Aorta (tissue), 5 donors: ENCODE measurements at regions of chr7 and their contacts with region 1.

Region 1: GRCh38 chr7:18570890-18571478 is 75.4 kb downstream of the HDAC9 start:
- DNase-seq: no peak
- ATAC-seq: no peak
- H3K4me3 ChIP-seq: peak overlapping the region in 1 of 2 donors; percentile 90
- H3K27ac ChIP-seq: no peak overlapping the region
- H3K4me1 ChIP-seq: peaks cover 0 to 5% of the 10 kb centered on the region in 2 donors
- H3K27me3 ChIP-seq: no peaks in the 10 kb centered on the region

Region 2: DNA sequence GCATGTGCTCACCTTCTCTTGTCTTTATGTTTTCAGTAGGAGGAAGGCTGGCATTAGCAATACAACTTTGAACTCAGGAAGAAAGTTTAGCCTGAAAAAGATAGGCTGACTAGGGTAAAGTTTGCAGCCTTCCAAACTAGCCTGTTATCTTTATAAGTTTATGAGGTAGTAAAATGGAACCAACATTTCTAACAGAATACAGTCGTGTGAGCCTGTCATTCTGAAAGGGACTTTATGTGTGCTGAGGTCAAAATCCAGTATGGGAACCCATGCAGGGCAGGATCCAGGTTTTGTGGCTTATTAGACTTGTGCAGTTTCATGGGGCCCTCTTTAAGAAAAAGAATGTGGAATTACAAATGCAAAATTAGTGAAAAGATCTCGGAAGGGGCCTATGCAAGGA is 342.3 kb before region 1 on chr7:
- intact Hi-C with region 1: no loop called
- DNase-seq: no peak
- ATAC-seq: no peak
- H3K4me3 ChIP-seq: no peak overlapping the region
- H3K27ac ChIP-seq: no peak overlapping the region
- H3K4me1 ChIP-seq: peaks cover 0 to 4% of the 10 kb centered on the region in 2 donors
- H3K27me3 ChIP-seq: no peaks in the 10 kb centered on the region

Region 3: GRCh38 chr7:18366394-18366793 is 204.6 kb before region 1 on chr7:
- intact Hi-C with region 1: loop called in 1 of 2 experiments (anchors 5 kb)
- DNase-seq: no peak
- ATAC-seq: no peak
- H3K4me3 ChIP-seq: no peak overlapping the region
- H3K27ac ChIP-seq: no peak overlapping the region
- H3K4me1 ChIP-seq: peaks cover 0 to 1% of the 10 kb centered on the region in 2 donors
- H3K27me3 ChIP-seq: no peaks in the 10 kb centered on the region

Region 4: GRCh38 chr7:18508443-18509427 is 62.2 kb before region 1 on chr7:
- intact Hi-C with region 1: loop called in 1 of 2 experiments (anchors 5 kb)
- DNase-seq: no peak
- ATAC-seq: peak; percentile 81
- H3K4me3 ChIP-seq: peak overlapping the region; percentile 40 to 66
- H3K27ac ChIP-seq: peak overlapping the region; percentile 98 to 99
- H3K4me1 ChIP-seq: peaks cover 0 to 7% of the 10 kb centered on the region in 2 donors
- H3K27me3 ChIP-seq: no peaks in the 10 kb centered on the region